Activated T-helper 1 cell treated with anti-CD3 and anti-CD28 coated beads, Interleukin-12 subunit alpha, Interleukin-12 subunit beta, Interleukin-2, Interleukin-4 antibody, amounts not matched to agents 30 ng/mL and 10 ng/mL and 1 ng/mL, durations not matched to agents 14 hours and 24 hours and 36 hours (primary cell): ENCODE measurements at regions of chr10 and their contacts with region 1.

Region 1: DNA sequence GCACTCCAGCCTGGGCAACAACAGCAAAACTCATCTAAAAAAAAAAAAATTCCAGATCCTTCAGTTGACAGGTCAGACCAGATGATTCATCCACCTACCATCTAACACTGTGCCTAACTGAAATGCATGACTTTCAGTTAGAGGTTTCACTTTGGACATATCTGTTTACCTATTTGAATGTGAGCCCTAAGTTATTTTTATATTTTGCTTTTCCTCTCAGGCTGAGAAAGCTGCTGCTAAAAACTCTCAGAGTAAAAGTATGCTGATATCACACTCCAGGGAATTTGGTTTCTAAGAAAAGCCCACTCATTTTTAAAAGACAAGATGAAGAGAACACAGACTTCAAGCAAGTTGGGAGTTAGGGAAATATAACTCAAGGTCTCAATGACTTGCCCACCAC is 126.0 kb downstream of the SGMS1 start:
- DNase-seq: no peak
- H3K4me3 Mint-ChIP-seq: peak overlapping the region; percentile 45
- H3K27ac Mint-ChIP-seq: peak overlapping the region; percentile 82
- H3K4me1 Mint-ChIP-seq: peaks cover 54% of the 10 kb centered on the region
- H3K27me3 Mint-ChIP-seq: no peaks in the 10 kb centered on the region

Region 2: GRCh38 chr10:50469778-50470193 is 28.0 kb before region 1 on chr10:
- intact Hi-C with region 1: loop called (anchors 5 kb)
- DNase-seq: no peak
- H3K4me3 Mint-ChIP-seq: no peak overlapping the region
- H3K27ac Mint-ChIP-seq: no peak overlapping the region
- H3K4me1 Mint-ChIP-seq: peaks cover 39% of the 10 kb centered on the region
- H3K27me3 Mint-ChIP-seq: no peaks in the 10 kb centered on the region

Region 3: GRCh38 chr10:50527442-50528043 is 29.8 kb after region 1 on chr10:
- intact Hi-C with region 1: no loop called
- DNase-seq: no peak
- H3K4me3 Mint-ChIP-seq: no peak overlapping the region
- H3K27ac Mint-ChIP-seq: no peak overlapping the region
- H3K4me1 Mint-ChIP-seq: peaks cover 25% of the 10 kb centered on the region
- H3K27me3 Mint-ChIP-seq: no peaks in the 10 kb centered on the region